ENCODE measurements at regions of chr19 and their contacts with region 1.

Region 1: DNA sequence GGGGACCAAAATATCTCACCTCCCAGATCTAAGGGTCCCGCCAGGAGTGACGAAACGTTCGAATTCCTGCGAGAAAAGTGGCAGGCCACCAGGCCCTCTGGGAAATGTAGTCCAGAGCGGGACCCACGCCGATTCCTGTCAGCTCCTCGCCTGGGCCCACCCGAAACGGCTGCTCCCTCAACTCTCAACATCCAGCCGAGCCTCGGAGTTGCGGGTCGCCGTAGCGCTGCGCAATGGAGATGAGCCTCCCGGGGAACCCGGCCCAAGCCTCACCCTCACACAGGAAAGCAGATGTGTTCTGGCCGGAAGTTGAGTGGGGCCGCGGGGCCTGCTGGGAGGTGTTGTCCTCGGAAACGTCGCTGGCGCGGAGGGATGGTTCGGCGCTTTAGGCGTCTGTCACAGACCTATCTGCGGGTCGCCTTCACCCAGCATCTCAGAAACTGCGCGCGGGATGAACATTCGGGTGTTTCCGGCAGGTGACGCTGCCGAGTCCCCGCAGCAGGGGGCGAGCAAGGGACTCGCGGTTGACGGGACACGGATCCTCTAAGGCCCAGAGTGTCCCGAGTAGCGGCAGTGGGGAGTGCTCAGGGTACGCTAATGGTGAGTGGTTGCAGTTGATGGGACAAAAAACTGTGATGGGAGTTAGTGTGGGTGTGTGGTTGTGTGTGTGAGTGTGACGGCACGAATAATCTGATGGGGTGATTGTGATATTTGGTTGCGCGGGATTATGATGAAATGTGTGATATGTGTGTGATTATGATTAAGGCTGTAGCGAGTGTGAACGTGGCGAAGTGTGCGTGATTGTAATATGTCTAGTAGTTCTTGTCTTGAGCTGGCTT is at the starts of genes ZNF568 and ZNF829:
- DNase-seq: peak; percentile 95
- ATAC-seq: peak; percentile 98
- total RNA-seq, gene ZNF568: 7.7 TPM
- total RNA-seq, gene ZNF829: 2.1 TPM

Region 2: GRCh38 chr19:36528194-36528920 is 387.9 kb before region 1 on chr19 and contains the start of gene ZNF260:
- intact Hi-C with region 1: loop called (anchors 2 kb)
- DNase-seq: peak; percentile 97
- ATAC-seq: peak; percentile 98
- total RNA-seq, gene ZNF260: 9.1 TPM

Region 3: DNA sequence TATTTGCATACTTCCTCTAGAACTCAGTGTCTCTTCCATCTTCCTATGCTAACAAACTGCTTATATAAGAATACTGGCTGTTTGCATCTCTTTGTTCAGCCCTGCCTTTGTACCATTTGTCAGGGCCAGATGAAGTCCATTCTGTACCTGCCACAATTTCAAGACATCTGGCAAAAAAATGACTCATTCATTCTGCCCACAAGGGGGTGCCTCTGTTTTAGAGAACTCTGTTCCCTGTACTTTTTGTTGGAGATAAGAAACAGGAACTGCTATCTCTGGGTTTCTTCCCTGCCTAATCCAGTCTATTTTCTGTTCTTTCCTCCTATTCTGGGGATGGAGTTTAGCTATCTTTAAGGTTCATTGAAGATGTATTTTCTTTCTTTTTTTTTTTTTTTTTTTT is 22.9 kb after region 1 on chr19:
- intact Hi-C with region 1: no loop called
- DNase-seq: no peak
- ATAC-seq: no peak

Region 4: DNA sequence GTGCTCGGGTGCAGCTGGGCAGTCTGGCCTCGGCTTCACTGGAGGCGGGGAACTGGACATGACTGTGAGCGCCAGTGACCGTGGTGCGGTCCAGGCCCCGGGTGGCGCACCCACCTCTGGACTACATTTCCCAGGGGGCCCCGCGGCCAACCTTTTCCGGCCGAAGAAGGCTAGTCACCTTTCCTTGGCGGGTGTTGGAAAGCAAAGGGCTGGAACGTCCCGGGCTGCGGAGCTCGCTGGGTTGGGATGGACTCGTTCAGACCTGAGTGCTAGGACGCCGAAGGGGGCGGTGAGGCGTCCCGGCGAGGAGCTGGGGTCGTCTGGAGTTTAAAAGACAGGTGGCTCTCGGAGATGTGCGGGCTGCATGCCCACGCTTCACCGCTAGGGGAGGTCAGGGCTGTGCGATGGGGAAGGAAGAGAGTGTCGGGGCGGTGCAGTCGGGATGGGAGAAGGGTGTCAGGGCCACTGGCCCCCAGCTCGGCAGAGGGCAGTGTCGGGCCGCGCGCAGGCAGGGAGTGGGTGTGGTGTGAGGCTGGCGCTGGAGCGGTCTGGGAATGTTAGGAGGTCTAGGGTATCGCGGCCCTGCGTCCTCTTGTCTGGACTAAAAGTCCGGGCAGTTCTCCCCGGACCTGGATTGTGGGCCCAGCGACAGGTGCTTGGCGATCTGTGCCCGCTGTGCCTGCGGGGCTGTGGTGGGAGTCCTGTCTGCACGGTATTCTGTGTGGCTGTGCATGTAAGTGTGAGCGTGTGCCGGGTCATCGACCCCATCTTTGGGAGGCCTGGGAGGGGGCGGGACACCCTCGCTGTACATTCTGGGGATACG is 57.0 kb after region 1 on chr19:
- intact Hi-C with region 1: loop called (anchors 5 kb)
- DNase-seq: peak; percentile 91
- ATAC-seq: peak; percentile 99

Region 5: DNA sequence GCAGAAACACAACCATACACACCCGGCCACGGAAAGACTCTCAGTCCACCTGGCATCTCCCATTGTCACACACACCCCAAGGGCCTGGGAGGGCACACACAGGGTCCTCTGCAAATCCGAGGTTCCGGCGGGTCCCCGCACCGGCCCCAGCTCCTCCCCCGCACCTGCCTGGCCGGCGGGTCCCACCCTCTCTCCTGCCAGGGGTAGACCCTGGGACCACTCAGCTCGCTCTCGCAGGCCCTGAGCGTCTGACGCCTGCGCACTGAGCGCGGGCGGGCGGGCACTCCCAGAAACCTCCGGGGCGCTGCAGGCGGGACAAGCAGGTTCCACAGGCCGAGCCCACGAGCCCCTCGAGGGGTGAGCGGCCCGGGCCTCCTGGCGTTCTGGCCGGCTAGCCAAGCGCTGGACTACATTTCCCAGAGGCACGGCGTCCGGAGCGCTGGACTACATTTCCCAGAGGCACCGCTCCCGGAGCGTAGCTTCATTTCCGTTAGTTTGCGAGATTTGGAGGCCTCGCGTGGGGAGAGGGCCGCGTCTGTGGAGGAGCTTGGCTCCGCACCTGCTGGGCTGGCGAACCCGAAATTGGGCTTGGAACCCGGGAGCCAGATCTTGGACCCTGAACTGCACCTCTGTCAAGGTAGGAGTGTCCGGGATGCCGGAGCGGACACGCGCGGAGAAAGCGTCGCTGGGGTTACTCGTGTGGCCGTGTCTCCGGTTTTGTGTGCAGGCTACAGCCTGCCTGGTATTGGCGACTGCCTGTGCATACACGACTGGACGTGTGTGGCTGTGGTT is 161.9 kb after region 1 on chr19 and contains the start of gene ZNF420:
- intact Hi-C with region 1: loop called (anchors 10 kb)
- DNase-seq: peak; percentile 95
- ATAC-seq: peak; percentile 99
- total RNA-seq, gene ZNF420: 11.6 TPM

Region 6: GRCh38 chr19:37370880-37371661 is 454.9 kb after region 1 on chr19 and contains the start of gene ZNF527:
- intact Hi-C with region 1: loop called (anchors 2 kb)
- DNase-seq: peak; percentile 98
- ATAC-seq: peak; percentile 99
- total RNA-seq, gene ZNF527: 5.6 TPM

Measured in Right ventricle myocardium inferior (tissue), 1 donor.